GM12878 (cell line): ENCODE measurements at regions of chr3 and their contacts with region 1.

Region 1: GRCh38 chr3:113002679-113003078 is 11.9 kb downstream of the GTPBP8 start:
- DNase-seq: no peak
- ATAC-seq: peak; percentile 68
- H3K4me3 ChIP-seq: no peak overlapping the region
- H3K27ac ChIP-seq: no peak overlapping the region
- H3K4me1 ChIP-seq: 0 out of 2 replicates have a peak, but pooled peaks cover 3% of the 10 kb centered on the region
- H3K27me3 ChIP-seq: no peaks in the 10 kb centered on the region
- CTCF ChIP-seq: no peak
- EP300 ChIP-seq: no peak
- POLR2A ChIP-seq: no peak
- RAD21 ChIP-seq: no peak

Region 2: GRCh38 chr3:112990672-112991602 is 11.7 kb before region 1 on chr3 and contains the start of gene GTPBP8:
- CTCF ChIA-PET with region 1: interaction called, 6 read pairs
- POLR2A ChIA-PET with region 1: interaction called, 14 read pairs
- RAD21 ChIA-PET with region 1: interaction called, 4 read pairs
- SMC1A ChIA-PET with region 1: interaction called, 15 read pairs
- in situ Hi-C with region 1: no loop called
- intact Hi-C with region 1: no loop called
- DNase-seq: peak; percentile 69
- ATAC-seq: peak; percentile 94
- H3K4me3 ChIP-seq: peak within 1 kb of the TSS; percentile 69
- H3K27ac ChIP-seq: peak within 1 kb of the TSS; percentile 90
- H3K4me1 ChIP-seq: peaks cover 6% of the 10 kb centered on the region
- H3K27me3 ChIP-seq: no peaks in the 10 kb centered on the region
- CTCF ChIP-seq: no peak
- EP300 ChIP-seq: peak; percentile 65 to 82; a peak in 3 of 4 replicates
- POLR2A ChIP-seq: peak; percentile 88
- RAD21 ChIP-seq: no peak
- polyA plus RNA-seq, gene GTPBP8: 18.8 to 29.0 TPM